CD14-positive monocyte (primary cell): ENCODE measurements at regions of chr9 and their contacts with region 1.

Region 1: GRCh38 chr9:120730661-120731514 is 16.6 kb upstream of the MEGF9 start:
- DNase-seq: no peak
- H3K4me3 ChIP-seq: no peak overlapping the region
- H3K4me3 Mint-ChIP-seq: no peak overlapping the region
- H3K27ac ChIP-seq: peak overlapping the region; percentile 13 to 98
- H3K27ac Mint-ChIP-seq: peak overlapping the region in 5 of 7 donors; percentile 4 to 89 (median 64)
- H3K4me1 ChIP-seq: peaks cover 76 to 91% of the 10 kb centered on the region in 2 donors
- H3K4me1 Mint-ChIP-seq: peaks cover 87% of the 10 kb centered on the region
- H3K27me3 ChIP-seq: no peaks in the 10 kb centered on the region
- H3K27me3 Mint-ChIP-seq: no peaks in the 10 kb centered on the region
- CTCF ChIP-seq: no peak

Region 2: DNA sequence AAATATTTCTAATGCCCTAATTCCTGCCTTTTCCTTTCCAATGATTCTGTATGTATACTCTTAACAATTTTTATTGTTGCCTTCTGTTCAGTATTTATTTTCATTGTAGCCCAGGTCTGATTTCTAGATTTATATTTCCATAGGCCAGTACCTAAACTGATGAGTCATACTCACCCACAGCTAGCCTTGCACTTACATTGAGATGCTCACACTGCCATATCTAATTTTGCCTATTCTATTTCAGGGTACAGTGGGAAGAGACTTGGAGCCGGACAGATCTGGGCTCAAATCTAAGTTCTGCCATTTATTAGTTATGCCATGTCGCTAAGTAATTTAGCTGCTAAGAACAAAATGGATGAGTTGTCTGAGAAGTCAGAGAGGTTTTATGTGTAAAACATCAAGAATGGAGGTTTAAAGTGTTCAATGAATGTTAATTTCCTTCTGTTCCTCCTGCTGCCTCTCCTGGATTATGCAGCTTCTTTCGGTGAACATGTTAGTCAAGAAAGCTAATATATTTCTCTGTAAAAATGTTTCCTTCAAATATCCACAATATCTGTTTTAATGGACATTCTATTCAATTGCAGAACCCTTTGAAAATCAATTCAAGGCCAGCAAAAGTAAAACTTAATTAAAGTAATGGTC is 88.6 kb before region 1 on chr9:
- intact Hi-C with region 1: no loop called
- DNase-seq: no peak
- H3K4me3 ChIP-seq: no peak overlapping the region
- H3K4me3 Mint-ChIP-seq: no peak overlapping the region
- H3K27ac ChIP-seq: peak overlapping the region in 1 of 2 donors; percentile 50
- H3K27ac Mint-ChIP-seq: peak overlapping the region in 5 of 7 donors; percentile 12 to 92 (median 74)
- H3K4me1 ChIP-seq: peaks cover 0 to 2% of the 10 kb centered on the region in 2 donors
- H3K4me1 Mint-ChIP-seq: peaks cover 17% of the 10 kb centered on the region
- H3K27me3 ChIP-seq: no peaks in the 10 kb centered on the region
- H3K27me3 Mint-ChIP-seq: no peaks in the 10 kb centered on the region
- CTCF ChIP-seq: no peak

Region 3: DNA sequence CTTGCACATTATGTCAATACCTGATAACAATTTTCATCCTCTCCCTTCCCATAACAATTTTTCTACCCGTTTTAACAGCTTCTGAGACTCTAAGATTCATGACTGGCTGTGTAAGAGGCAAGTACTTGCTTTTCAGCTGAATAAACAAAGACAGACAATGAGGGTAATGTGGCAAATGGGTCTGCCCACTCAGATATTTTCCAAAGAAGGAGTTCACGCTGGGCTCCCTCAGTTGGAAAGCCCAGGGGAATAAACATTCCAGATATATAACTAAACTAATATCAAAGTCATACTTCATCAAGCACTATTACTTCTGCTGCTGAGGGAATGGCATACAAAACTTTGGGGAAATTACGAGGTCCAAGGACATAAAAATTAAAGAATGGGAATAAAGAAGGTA is 41.0 kb before region 1 on chr9:
- intact Hi-C with region 1: loop called in 1 of 2 experiments (anchors 10 kb)
- DNase-seq: no peak
- H3K4me3 ChIP-seq: no peak overlapping the region
- H3K4me3 Mint-ChIP-seq: no peak overlapping the region
- H3K27ac ChIP-seq: peak overlapping the region in 1 of 2 donors; percentile 54
- H3K27ac Mint-ChIP-seq: no peak overlapping the region
- H3K4me1 ChIP-seq: peaks cover 80 to 98% of the 10 kb centered on the region in 2 donors
- H3K4me1 Mint-ChIP-seq: peaks cover 61% of the 10 kb centered on the region
- H3K27me3 ChIP-seq: no peaks in the 10 kb centered on the region
- H3K27me3 Mint-ChIP-seq: no peaks in the 10 kb centered on the region
- CTCF ChIP-seq: no peak

Region 4: GRCh38 chr9:120714088-120714845 is 16.6 kb before region 1 on chr9 and contains the start of gene MEGF9:
- intact Hi-C with region 1: loop called in 1 of 2 experiments (anchors 2 kb)
- DNase-seq: peak; percentile 95 to 97 (median 96)
- H3K4me3 ChIP-seq: peak within 1 kb of the TSS; percentile 87 to 99 (median 98)
- H3K4me3 Mint-ChIP-seq: peak within 1 kb of the TSS; percentile 96 to 98
- H3K27ac ChIP-seq: peak within 1 kb of the TSS; percentile 82 to 91
- H3K27ac Mint-ChIP-seq: peak within 1 kb of the TSS; percentile 87 to 97 (median 95)
- H3K4me1 ChIP-seq: peaks cover 33 to 51% of the 10 kb centered on the region in 2 donors
- H3K4me1 Mint-ChIP-seq: peaks cover 52% of the 10 kb centered on the region
- H3K27me3 ChIP-seq: no peaks in the 10 kb centered on the region
- H3K27me3 Mint-ChIP-seq: no peaks in the 10 kb centered on the region
- CTCF ChIP-seq: no peak
- polyA plus RNA-seq, gene MEGF9: 45.0 to 92.8 (median 89.7) TPM

Region 5: DNA sequence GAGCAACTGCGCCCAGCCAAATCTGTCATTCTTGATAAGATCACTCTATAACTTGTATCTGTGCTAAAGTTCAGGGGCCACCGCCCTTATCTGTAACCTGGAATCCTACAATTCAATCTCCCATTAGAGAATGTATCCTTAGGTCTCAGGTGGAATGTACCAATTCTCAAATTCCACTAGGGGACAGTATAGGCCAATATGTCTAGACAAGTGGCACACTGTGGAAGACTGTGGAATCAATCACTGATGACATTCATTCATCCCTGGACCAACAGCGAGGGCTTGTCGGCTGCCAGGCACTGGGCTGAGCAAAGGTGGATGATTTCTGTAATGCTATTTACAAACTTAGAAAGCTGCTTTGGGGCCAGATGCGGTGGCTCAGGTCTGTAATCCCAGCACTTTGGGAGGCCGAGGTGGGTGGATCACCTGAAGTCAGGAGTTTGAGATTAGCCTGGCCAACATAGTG is 12.1 kb after region 1 on chr9:
- intact Hi-C with region 1: no loop called
- DNase-seq: peak in 2 of 3 donors; percentile 51 to 57
- H3K4me3 ChIP-seq: no peak overlapping the region
- H3K4me3 Mint-ChIP-seq: no peak overlapping the region
- H3K27ac ChIP-seq: no peak overlapping the region
- H3K27ac Mint-ChIP-seq: peak overlapping the region in 1 of 7 donors; percentile 36
- H3K4me1 ChIP-seq: peaks cover 37 to 42% of the 10 kb centered on the region in 2 donors
- H3K4me1 Mint-ChIP-seq: peaks cover 34% of the 10 kb centered on the region
- H3K27me3 ChIP-seq: no peaks in the 10 kb centered on the region
- H3K27me3 Mint-ChIP-seq: no peaks in the 10 kb centered on the region
- CTCF ChIP-seq: peak; percentile 83

Region 6: GRCh38 chr9:120783602-120784047 is 52.7 kb after region 1 on chr9:
- intact Hi-C with region 1: loop called in 1 of 2 experiments (anchors 10 kb)
- DNase-seq: peak; percentile 79 to 94 (median 91)
- H3K4me3 ChIP-seq: no peak overlapping the region
- H3K4me3 Mint-ChIP-seq: no peak overlapping the region
- H3K27ac ChIP-seq: peak overlapping the region in 1 of 2 donors; percentile 63
- H3K27ac Mint-ChIP-seq: peak overlapping the region; percentile 90 to 97 (median 95)
- H3K4me1 ChIP-seq: peaks cover 20 to 36% of the 10 kb centered on the region in 2 donors
- H3K4me1 Mint-ChIP-seq: peaks cover 38% of the 10 kb centered on the region
- H3K27me3 ChIP-seq: no peaks in the 10 kb centered on the region
- H3K27me3 Mint-ChIP-seq: no peaks in the 10 kb centered on the region
- CTCF ChIP-seq: no peak